ENCODE measurements at regions of chr19 and their contacts with region 1.

Region 1: GRCh38 chr19:39445265-39446111 is at the start of gene SUPT5H:
- DNase-seq: peak; percentile 99
- total RNA-seq, gene SUPT5H: 67.0 to 74.9 TPM

Region 2: DNA sequence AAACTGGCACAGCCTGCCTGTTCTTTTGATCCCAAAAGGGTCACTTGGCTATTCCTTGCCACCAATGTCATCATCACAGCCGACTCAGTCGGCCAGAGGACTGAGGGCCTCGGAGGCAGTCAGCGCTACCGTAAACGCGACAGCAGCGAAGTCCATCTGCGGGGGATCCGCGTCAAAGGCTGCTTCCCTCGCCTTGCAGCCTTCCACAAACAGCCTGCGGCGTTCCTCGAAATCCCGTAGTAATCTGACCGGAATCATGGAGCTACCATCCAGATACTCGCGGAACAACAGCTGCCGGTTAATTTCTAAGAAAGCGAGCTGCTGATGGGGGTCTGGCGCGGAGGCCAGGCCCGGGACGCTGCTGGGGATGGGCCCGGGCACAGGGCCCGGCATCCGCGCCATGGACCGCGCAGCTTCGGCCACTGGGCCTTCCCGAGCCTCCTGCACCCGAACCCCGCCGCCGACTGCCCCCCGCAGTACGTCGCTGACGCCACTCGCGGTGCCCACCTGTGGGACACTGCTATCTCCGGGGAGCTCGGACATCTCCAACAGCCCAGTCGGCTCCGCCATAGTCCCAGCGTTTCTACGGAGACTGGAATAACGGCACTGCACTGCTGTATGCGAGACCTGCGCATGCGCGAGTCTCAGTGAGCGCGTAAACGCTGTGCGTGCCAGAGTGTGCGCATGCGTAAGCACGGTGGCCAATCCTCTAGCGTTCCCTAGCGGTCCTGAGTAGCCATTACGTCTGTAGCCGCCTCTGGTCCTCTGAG is 86.9 kb after region 1 on chr19 and contains the start of gene EID2B:
- intact Hi-C with region 1: loop called in 1 of 2 experiments (anchors 5 kb)
- DNase-seq: peak; percentile 99
- total RNA-seq, gene EID2B: 2.4 to 2.9 TPM